Dendritic cell treated with granulocyte-macrophage colony-stimulating factor and Interleukin-4, amounts not matched to agents 40 ng/mL and 50 ng/mL, for 4 days (primary cell): ENCODE measurements at regions of chr4 and their contacts with region 1.

Region 1: GRCh38 chr4:39469429-39470077 is 10.7 kb downstream of the LIAS start:
- H3K4me3 Mint-ChIP-seq: peak overlapping the region; percentile 60
- H3K27ac Mint-ChIP-seq: peak overlapping the region; percentile 87
- H3K4me1 Mint-ChIP-seq: peaks cover 6% of the 10 kb centered on the region
- H3K27me3 Mint-ChIP-seq: no peaks in the 10 kb centered on the region

Region 2: GRCh38 chr4:39660045-39660444 is 190.5 kb after region 1 on chr4:
- intact Hi-C with region 1: loop called (anchors 2 kb)
- H3K4me3 Mint-ChIP-seq: no peak overlapping the region
- H3K27ac Mint-ChIP-seq: no peak overlapping the region
- H3K4me1 Mint-ChIP-seq: peaks cover 12% of the 10 kb centered on the region
- H3K27me3 Mint-ChIP-seq: no peaks in the 10 kb centered on the region